Activated T-helper 2 cell treated with anti-CD3 and anti-CD28 coated beads, Interferon-gamma antibody, Interleukin-2, Interleukin-4, amounts not matched to agents 10 μg/mL and 5 μg/mL and 100 μg/mL, durations not matched to agents 14 hours and 24 hours and 36 hours (primary cell): ENCODE measurements at regions of chr21 and their contacts with region 1.

Region 1: DNA sequence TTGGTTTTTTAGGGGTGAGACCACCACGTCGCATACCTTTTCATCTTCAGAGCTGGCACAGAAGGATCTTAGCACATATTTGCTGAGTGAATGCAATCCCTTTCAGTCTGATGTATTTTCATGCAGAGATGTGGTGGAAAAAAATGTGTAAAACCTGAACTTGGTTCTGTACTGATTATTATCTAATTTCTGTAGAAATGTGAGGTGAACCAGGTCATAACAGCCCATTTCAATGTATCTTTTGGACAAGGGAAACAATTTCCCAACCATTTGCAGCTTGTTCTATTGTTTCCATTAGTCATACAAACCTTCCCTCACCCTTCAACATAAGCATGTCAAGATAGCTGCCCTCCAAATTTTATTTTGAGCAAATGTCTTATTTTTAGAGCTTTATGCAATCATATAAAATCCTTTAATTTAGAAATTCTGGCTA is 46.8 kb upstream of the RUNX1 start:
- DNase-seq: no peak
- H3K4me3 Mint-ChIP-seq: no peak overlapping the region
- H3K27ac Mint-ChIP-seq: peak overlapping the region; percentile 93
- H3K4me1 Mint-ChIP-seq: peaks cover 65% of the 10 kb centered on the region
- H3K27me3 Mint-ChIP-seq: no peaks in the 10 kb centered on the region

Region 2: DNA sequence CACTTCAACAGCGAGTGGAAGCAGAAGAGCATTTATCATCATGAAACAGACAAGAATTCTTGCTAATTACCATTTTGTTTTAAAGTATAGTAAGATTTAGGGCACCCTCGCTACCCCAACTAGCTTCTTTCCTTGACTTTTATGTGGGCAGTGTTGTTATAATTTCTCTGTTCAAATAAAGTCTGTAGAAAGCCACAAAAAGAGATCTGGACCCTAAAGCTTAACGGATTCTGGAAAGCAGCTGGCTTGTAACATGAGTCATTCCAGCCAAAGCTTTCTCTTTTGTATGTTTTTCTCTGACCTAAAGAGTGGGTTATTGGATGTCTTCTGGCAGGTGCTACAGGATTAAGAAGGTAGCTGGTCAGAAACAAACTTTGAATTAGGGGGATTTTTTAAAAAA is 84.2 kb before region 1 on chr21:
- intact Hi-C with region 1: no loop called
- DNase-seq: no peak
- H3K4me3 Mint-ChIP-seq: peak overlapping the region; percentile 26
- H3K27ac Mint-ChIP-seq: peak overlapping the region; percentile 58
- H3K4me1 Mint-ChIP-seq: peaks cover 81% of the 10 kb centered on the region
- H3K27me3 Mint-ChIP-seq: no peaks in the 10 kb centered on the region

Region 3: DNA sequence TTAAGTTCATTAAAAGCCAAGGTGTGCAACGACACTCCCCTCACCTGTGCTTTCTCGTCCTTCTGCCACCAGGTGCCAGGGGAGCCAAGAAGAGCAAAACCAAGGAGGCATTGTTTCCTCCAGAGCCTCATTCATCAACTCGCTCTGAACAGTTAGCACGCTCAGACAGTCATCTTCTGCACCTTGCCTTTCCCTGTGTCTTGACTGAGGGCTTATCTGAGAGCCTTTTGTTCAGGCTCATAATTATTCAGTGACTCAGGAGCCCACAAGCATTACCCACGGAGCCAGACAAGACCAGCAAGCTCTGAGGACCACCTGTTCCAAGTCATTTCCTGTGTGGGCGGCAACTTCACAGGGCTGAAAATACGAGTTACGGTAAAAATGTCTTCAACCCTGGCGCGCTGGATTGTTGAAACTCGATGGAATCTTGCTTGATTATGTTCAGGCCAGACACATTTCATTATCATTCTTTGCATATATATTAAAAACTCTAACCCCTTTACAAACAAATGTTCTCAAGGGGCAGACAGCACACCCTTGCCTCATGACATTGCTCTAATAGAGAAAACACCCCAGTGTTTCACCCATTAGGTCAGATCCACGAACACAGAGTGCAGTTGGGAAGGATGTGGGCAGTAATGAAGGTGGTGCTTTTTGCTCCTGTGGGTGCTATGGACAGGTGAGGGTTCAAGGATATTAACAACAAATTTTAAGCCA is 42.9 kb after region 1 on chr21:
- intact Hi-C with region 1: loop called (anchors 1 kb)
- DNase-seq: peak; percentile 10
- H3K4me3 Mint-ChIP-seq: peak overlapping the region; percentile 62
- H3K27ac Mint-ChIP-seq: peak overlapping the region; percentile 94
- H3K4me1 Mint-ChIP-seq: peaks cover 33% of the 10 kb centered on the region
- H3K27me3 Mint-ChIP-seq: no peaks in the 10 kb centered on the region

Region 4: GRCh38 chr21:35156293-35157278 is 60.7 kb after region 1 on chr21:
- intact Hi-C with region 1: no loop called
- DNase-seq: no peak
- H3K4me3 Mint-ChIP-seq: no peak overlapping the region
- H3K27ac Mint-ChIP-seq: no peak overlapping the region
- H3K4me1 Mint-ChIP-seq: peaks cover 16% of the 10 kb centered on the region
- H3K27me3 Mint-ChIP-seq: no peaks in the 10 kb centered on the region

Region 5: GRCh38 chr21:35198031-35198431 is 102.2 kb after region 1 on chr21:
- intact Hi-C with region 1: loop called (anchors 2 kb)
- DNase-seq: no peak
- H3K4me3 Mint-ChIP-seq: no peak overlapping the region
- H3K27ac Mint-ChIP-seq: peak overlapping the region; percentile 64
- H3K4me1 Mint-ChIP-seq: peaks cover 38% of the 10 kb centered on the region
- H3K27me3 Mint-ChIP-seq: no peaks in the 10 kb centered on the region

Region 6: GRCh38 chr21:35273322-35273721 is 177.4 kb after region 1 on chr21:
- intact Hi-C with region 1: no loop called
- DNase-seq: no peak
- H3K4me3 Mint-ChIP-seq: no peak overlapping the region
- H3K27ac Mint-ChIP-seq: no peak overlapping the region
- H3K4me1 Mint-ChIP-seq: peaks cover 5% of the 10 kb centered on the region
- H3K27me3 Mint-ChIP-seq: no peaks in the 10 kb centered on the region

Region 7: GRCh38 chr21:35324372-35325220 is 228.7 kb after region 1 on chr21:
- intact Hi-C with region 1: loop called (anchors 5 kb)
- DNase-seq: no peak
- H3K4me3 Mint-ChIP-seq: no peak overlapping the region
- H3K27ac Mint-ChIP-seq: peak overlapping the region; percentile 79
- H3K4me1 Mint-ChIP-seq: peaks cover 42% of the 10 kb centered on the region
- H3K27me3 Mint-ChIP-seq: no peaks in the 10 kb centered on the region

Region 8: DNA sequence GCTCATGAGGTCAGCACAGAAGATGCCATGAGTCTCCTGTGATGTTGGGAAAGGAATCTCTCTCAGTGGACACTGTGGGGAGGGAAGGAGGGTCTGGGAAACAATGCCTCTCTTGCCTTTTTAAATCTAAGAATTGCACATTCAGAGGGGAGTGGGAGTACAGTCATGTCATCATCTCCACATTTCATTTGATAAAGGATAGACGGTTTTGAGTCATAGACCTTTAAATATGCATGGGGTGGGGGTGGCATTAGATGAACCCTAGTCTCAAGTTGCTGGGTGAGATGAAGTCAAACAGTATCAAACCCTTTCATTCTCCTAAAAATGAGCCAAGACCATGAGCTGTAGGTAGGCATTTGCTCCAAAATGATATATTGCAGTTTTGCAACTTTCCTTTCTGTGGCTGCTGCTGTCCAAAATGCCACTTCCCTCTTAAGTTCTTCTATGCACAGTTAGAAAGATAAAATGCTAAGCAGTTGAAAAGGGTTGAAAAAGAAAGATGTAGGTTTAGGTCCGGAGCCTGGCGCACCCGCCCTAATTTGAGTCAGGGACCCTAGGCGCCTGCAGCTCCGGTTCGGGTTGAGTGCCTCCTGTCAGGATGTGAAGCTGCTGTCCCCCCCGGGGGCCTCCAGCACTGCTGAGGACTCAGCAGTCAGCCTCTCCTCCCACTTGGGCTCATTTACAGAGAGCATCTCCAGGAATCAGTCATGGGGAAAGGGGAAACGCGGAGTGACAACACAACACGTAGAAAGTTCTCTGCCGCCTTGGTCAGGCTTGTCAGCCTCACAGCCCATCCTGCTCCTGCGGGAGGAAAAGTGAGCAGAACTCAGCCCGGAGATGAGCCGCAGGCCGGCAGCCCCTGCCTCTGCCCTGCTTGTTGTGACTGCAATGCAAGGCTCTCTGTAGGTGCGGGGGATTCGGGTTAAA is 432.5 kb after region 1 on chr21:
- intact Hi-C with region 1: loop called (anchors 5 kb)
- DNase-seq: peak; percentile 26
- H3K4me3 Mint-ChIP-seq: peak overlapping the region; percentile 85
- H3K27ac Mint-ChIP-seq: peak overlapping the region; percentile 95
- H3K4me1 Mint-ChIP-seq: peaks cover 53% of the 10 kb centered on the region
- H3K27me3 Mint-ChIP-seq: no peaks in the 10 kb centered on the region